Ascending aorta (tissue), 2 donors: ENCODE measurements at regions of chr7 and their contacts with region 1.

Region 1: GRCh38 chr7:127392566-127393367 is at the start of gene ZNF800:
- DNase-seq: peak; percentile 63 to 95
- H3K4me3 ChIP-seq: peak within 1 kb of the TSS; percentile 94 to 97
- H3K27ac ChIP-seq: peak within 1 kb of the TSS; percentile 98 to 99
- H3K4me1 ChIP-seq: peaks cover 9 to 15% of the 10 kb centered on the region in 2 donors
- H3K27me3 ChIP-seq: no peaks in the 10 kb centered on the region
- CTCF ChIP-seq: no peak
- total RNA-seq, gene ZNF800: 36.9 TPM

Region 2: DNA sequence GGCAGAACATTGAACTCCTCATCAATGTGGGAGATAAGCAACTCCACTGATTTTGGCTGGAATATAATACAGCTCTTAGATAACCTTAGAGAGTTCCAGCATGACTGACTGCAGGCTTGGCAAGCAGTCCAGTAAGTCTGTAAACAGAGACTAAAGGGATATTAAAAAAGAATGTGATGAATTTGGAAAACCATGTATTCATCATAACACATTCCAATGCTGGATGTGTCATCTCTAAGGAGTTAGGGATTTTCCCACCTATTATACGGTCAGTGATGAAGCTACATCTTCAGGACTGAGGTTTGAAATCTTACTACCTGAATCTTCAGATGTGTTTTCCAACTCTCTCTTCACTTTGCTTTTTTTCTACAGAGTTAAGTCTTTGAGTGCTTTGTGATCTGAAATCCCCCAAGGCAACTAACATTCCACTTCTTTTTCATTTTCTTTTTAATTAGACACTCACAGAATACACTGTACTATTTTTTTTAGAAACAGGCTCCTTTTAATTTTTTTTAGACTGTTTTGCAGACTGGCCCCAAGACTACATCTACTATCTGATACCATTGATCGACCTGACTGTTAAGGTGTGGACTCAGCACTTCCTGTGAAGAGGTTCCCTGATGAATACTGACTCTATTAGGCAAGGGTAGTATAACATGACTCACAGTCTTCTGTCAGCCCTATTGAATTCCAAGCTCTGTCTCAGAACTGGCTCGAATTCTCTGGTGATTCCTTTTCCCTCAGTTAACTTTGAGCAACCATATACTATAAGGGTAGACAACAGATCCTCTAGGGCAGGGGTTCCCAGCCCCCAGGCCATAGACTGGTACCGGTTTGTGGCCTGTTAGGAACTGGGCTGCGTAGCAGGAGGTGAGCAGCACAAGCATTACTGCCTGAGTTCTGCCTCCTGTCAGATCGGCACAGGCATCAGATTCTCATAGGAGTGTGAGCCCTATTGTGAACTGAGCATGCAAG is 818.2 kb before region 1 on chr7:
- intact Hi-C with region 1: no loop called
- DNase-seq: no peak
- H3K4me3 ChIP-seq: no peak overlapping the region
- H3K27ac ChIP-seq: no peak overlapping the region
- H3K4me1 ChIP-seq: no peaks in the 10 kb centered on the region
- H3K27me3 ChIP-seq: no peaks in the 10 kb centered on the region
- CTCF ChIP-seq: no peak

Region 3: GRCh38 chr7:127253281-127254162 is 139.2 kb before region 1 on chr7:
- intact Hi-C with region 1: loop called (anchors 2 kb)
- DNase-seq: peak in 1 of 2 donors; percentile 74
- H3K4me3 ChIP-seq: peak overlapping the region; percentile 53 to 96
- H3K27ac ChIP-seq: peak overlapping the region; percentile 8 to 45
- H3K4me1 ChIP-seq: peaks cover 15 to 18% of the 10 kb centered on the region in 2 donors
- H3K27me3 ChIP-seq: no peaks in the 10 kb centered on the region
- CTCF ChIP-seq: peak; percentile 54 to 95 (median 94)

Region 4: DNA sequence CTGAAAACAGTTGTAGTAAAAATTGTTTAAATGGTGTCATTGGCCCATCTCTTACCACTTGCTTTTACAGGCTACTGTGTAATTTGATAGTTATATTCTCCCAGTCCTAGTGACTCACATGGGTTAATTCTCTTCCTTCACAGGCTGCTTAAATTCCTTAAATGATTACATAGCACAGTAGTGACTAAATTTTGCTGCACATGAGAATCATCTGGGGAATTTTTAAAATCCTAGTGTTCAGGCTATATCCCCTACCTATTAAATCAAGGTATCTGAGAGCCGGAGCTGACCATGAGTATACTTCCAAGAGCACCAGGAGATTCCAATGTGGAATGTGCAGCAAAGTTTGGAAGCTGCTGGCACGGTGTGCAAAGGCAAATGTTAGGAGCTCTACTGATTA is 45.1 kb after region 1 on chr7:
- intact Hi-C with region 1: no loop called
- DNase-seq: no peak
- H3K4me3 ChIP-seq: no peak overlapping the region
- H3K27ac ChIP-seq: no peak overlapping the region
- H3K4me1 ChIP-seq: no peaks in the 10 kb centered on the region
- H3K27me3 ChIP-seq: no peaks in the 10 kb centered on the region
- CTCF ChIP-seq: no peak

Region 5: GRCh38 chr7:127651556-127652332 is 259.0 kb after region 1 on chr7 and contains the start of gene SND1:
- intact Hi-C with region 1: loop called (anchors 1 kb)
- DNase-seq: peak; percentile 99 to 100
- H3K4me3 ChIP-seq: peak within 1 kb of the TSS; percentile 73 to 89
- H3K27ac ChIP-seq: peak within 1 kb of the TSS; percentile 93 to 96
- H3K4me1 ChIP-seq: peaks cover 0 to 24% of the 10 kb centered on the region in 2 donors
- H3K27me3 ChIP-seq: no peaks in the 10 kb centered on the region
- CTCF ChIP-seq: no peak
- total RNA-seq, gene SND1: 93.8 TPM

Region 6: GRCh38 chr7:128343554-128344430 is 951.0 kb after region 1 on chr7 and contains the start of gene RBM28:
- intact Hi-C with region 1: loop called (anchors 5 kb)
- DNase-seq: peak; percentile 59 to 92
- H3K4me3 ChIP-seq: peak within 1 kb of the TSS; percentile 61 to 76
- H3K27ac ChIP-seq: peak within 1 kb of the TSS; percentile 66 to 69
- H3K4me1 ChIP-seq: peaks cover 4 to 13% of the 10 kb centered on the region in 2 donors
- H3K27me3 ChIP-seq: no peaks in the 10 kb centered on the region
- CTCF ChIP-seq: no peak
- total RNA-seq, gene RBM28: 23.8 TPM